Left ventricle myocardium inferior (tissue), 1 donor: ENCODE measurements at regions of chr3 and their contacts with region 1.

Region 1: GRCh38 chr3:193572426-193572908 is 17.8 kb upstream of the ATP13A4 start:
- DNase-seq: peak; percentile 18
- H3K4me3 ChIP-seq: no peak overlapping the region
- H3K27ac ChIP-seq: no peak overlapping the region
- H3K4me1 ChIP-seq: no peaks in the 10 kb centered on the region
- H3K27me3 ChIP-seq: no peaks in the 10 kb centered on the region
- CTCF ChIP-seq: peak; percentile 84

Region 2: DNA sequence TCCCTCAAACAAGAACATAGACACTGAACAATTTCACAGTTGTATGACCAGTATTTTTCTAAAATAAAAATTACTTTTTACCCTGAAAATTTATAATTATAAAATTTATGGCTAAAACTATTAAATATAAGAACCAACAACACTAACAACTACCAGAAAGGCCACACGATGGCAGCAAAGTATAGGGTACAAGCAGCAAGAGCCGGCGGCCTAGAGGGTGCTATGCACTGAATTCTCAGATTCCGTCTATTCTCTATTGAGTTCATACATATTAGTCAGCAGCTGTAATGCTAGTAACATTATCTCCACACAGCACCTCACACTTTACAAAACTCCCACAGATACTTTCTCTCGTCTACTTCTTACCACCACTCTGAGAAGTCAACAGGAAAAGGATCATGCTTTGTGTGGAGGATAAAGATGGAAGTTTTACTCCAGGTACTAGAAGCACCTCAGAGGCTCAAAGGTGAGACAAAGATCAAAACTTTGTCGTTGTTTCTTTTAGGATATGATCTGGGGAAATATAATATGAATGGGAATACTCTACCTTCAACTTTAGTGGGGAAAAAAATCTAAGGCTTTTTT is 1005.7 kb before region 1 on chr3:
- intact Hi-C with region 1: loop called (anchors 10 kb)
- DNase-seq: peak; percentile 51
- H3K4me3 ChIP-seq: peak overlapping the region; percentile 44
- H3K27ac ChIP-seq: peak overlapping the region; percentile 89
- H3K4me1 ChIP-seq: peaks cover 41% of the 10 kb centered on the region
- H3K27me3 ChIP-seq: no peaks in the 10 kb centered on the region
- CTCF ChIP-seq: peak; percentile 81

Region 3: DNA sequence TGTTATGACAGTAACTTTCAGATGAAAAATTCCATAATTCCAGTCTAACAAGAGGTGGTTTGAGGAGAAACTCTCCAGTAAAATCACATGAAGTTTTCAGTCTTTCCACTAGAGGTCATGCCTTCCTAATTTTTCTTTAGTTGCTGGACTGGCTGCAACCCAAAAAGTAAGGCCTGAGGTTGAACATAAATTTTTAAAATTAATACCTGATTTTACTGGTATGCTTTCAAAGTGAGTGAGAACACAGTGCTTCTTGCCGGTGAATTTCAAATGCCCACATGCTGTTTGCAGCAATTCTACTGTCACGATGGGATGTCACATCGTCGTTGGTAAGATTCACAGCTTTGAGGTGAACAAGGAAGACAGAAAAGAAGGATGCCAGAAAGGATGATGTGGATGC is 756.1 kb before region 1 on chr3:
- intact Hi-C with region 1: loop called (anchors 2 kb)
- DNase-seq: no peak
- H3K4me3 ChIP-seq: no peak overlapping the region
- H3K27ac ChIP-seq: no peak overlapping the region
- H3K4me1 ChIP-seq: peaks cover 22% of the 10 kb centered on the region
- H3K27me3 ChIP-seq: no peaks in the 10 kb centered on the region
- CTCF ChIP-seq: peak; percentile 78

Region 4: DNA sequence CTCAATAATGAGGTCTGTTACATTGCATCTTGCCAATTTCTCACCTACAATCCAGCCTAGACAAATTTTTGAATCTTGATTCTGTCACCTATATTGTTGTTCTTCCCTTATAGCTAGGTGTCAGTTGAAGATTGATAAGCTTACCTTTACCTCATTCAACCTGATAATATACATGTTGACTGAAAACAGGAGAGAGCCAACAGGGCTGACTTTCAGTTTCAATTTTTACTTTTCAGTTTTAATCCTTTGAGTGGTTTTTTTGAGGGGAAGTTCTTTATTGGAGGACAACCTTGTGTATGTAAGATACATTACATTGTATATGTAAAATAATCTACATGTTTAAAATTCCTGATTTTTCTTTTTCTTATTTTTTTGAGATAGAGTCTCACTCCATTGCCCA is 199.7 kb before region 1 on chr3:
- intact Hi-C with region 1: no loop called
- DNase-seq: no peak
- H3K4me3 ChIP-seq: no peak overlapping the region
- H3K27ac ChIP-seq: no peak overlapping the region
- H3K4me1 ChIP-seq: no peaks in the 10 kb centered on the region
- H3K27me3 ChIP-seq: no peaks in the 10 kb centered on the region
- CTCF ChIP-seq: no peak

Region 5: GRCh38 chr3:193465992-193466608 is 106.4 kb before region 1 on chr3:
- intact Hi-C with region 1: loop called (anchors 10 kb)
- DNase-seq: no peak
- H3K4me3 ChIP-seq: no peak overlapping the region
- H3K27ac ChIP-seq: no peak overlapping the region
- H3K4me1 ChIP-seq: no peaks in the 10 kb centered on the region
- H3K27me3 ChIP-seq: no peaks in the 10 kb centered on the region
- CTCF ChIP-seq: no peak

Region 6: GRCh38 chr3:193764959-193765358 is 192.5 kb after region 1 on chr3:
- intact Hi-C with region 1: no loop called
- DNase-seq: no peak
- H3K4me3 ChIP-seq: no peak overlapping the region
- H3K27ac ChIP-seq: no peak overlapping the region
- H3K4me1 ChIP-seq: no peaks in the 10 kb centered on the region
- H3K27me3 ChIP-seq: no peaks in the 10 kb centered on the region
- CTCF ChIP-seq: no peak

Region 7: DNA sequence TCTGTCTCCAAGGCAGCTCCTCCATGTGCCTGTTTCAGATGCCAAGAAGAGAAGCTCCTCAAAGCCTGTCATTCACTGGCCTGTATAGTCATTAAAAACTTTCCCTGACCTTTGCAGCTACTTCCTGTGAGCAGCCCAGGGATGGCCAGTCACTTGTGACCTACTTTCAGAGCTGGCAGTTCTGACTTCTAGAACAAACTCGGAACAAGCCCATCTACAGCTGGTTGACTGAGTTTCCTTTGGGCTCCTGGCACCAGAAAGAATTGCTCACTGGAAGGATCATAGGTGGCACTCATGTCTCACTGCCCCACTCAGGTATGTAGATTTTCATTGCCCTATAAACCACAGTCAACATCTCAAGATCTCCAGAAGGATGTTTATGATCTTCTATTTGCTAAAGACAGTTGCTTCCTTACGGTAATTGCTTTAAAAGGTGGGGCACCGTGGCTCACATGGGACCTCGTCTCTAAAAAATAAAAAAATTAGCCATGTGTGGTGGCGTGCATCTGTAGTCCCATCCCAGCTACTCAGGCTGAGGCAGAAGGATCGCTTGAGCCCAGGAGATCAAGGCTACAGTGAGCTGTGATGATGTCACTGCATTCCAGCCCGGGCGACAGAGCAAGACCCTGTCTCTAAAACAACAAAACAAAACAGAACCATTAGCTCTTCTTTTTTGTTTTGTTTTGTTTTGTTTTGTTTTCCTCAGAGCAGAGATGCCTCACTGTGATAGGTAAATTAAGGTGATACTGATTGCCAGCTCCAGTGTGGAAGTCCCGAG is 925.5 kb after region 1 on chr3:
- intact Hi-C with region 1: no loop called
- DNase-seq: no peak
- H3K4me3 ChIP-seq: no peak overlapping the region
- H3K27ac ChIP-seq: peak overlapping the region; percentile 22
- H3K4me1 ChIP-seq: peaks cover 32% of the 10 kb centered on the region
- H3K27me3 ChIP-seq: no peaks in the 10 kb centered on the region
- CTCF ChIP-seq: no peak